Activated CD4-positive, alpha-beta memory T cell treated with anti-CD3 and anti-CD28 coated beads, Interleukin-2, amount 10 ng/mL, durations not matched to agents 7 days and 5 days (primary cell): ENCODE measurements at regions of chr2 and their contacts with region 1.

Region 1: DNA sequence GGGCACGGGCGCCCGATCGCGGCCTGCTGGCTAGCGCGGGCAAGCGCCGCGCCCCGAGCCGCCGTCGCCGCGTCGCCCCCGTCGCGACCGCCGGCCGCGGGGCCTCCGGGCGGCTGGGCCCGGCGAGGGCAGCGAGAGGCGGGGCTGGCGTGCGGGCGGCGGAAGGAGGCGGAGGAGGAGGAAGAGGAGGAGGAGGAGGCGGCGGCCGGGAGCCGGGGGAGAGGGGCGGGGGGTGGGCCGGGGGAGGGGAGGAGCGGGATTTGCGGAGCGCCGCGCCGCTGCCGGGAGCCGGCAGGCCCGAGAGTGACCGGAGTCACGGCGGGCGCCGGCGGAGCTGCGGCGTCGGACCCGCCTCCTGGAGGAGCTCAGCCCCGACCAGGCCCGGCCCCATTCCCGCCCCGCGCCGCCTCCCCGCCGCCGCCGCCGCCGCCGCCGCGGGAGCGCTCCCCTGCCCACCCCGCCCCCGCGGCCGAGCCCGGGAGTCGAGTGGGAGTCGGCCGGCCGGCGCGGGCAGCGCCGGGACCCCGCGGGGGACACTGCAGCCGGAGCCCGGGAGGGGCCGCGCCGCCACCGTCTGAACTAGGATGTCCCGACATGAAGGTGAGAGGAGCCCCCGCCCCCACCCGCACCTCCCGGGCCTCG is at the start of gene KCMF1:
- DNase-seq: peak; percentile 76
- H3K4me3 Mint-ChIP-seq: peak within 1 kb of the TSS; percentile 96
- H3K27ac Mint-ChIP-seq: peak within 1 kb of the TSS; percentile 100
- H3K4me1 Mint-ChIP-seq: peaks cover 47% of the 10 kb centered on the region
- H3K27me3 Mint-ChIP-seq: no peaks in the 10 kb centered on the region
- total RNA-seq, gene KCMF1: 87.0 to 92.9 TPM

Region 2: GRCh38 chr2:84905181-84906107 is 65.5 kb before region 1 on chr2 and contains the start of gene TMSB10:
- CTCF ChIA-PET with region 1: interaction called, 3 read pairs
- POLR2A ChIA-PET with region 1: interaction called, 63 read pairs
- DNase-seq: peak; percentile 91
- H3K4me3 Mint-ChIP-seq: peak within 1 kb of the TSS; percentile 89
- H3K27ac Mint-ChIP-seq: peak within 1 kb of the TSS; percentile 94
- H3K4me1 Mint-ChIP-seq: peaks cover 67% of the 10 kb centered on the region
- H3K27me3 Mint-ChIP-seq: no peaks in the 10 kb centered on the region
- total RNA-seq, gene TMSB10: 5,686 to 5,768 TPM

Region 3: DNA sequence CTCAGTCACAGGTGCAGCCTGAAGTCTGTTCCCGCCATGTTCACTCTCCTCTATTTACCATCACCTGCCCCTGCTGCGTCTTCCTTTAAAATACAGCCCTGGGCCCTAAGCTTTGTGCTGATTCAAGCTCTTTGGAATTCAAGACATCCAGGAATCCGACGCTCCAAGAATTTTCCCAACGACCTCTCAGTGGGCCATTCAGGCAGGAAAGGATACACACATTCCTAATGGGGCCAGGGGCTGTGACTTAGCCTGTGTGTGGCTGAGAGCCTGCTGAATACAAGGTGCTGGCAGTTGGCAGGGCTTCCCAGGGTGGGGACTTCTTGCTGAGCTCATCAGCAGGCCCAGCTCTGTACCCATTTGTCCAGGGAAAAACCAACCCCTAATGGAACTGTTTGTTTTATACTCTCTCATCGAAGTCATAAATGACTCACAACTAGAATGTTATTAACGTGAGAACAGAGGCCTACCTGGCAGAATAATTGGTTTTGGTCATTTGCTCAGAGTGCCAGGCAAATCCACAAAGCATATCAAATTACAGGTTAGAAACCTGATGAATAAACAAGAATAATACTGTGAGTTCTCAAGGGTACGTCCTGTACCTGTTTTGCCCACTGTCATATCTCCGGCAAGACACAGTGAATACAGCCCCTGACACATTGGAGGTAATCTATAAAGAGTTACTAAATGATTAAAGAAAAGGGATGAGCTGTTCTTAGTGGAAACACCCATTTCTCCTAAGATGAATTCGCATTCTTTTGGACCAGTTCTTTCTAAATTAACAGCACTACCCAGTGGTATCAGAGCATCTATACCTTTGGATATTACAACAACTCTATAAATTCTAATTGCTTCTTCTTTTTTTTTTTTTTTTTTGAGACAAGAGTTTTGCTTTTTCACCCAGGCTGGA is 12.6 kb before region 1 on chr2:
- CTCF ChIA-PET with region 1: interaction called, 3 read pairs
- POLR2A ChIA-PET with region 1: interaction called, 46 read pairs
- DNase-seq: no peak
- H3K4me3 Mint-ChIP-seq: no peak overlapping the region
- H3K27ac Mint-ChIP-seq: no peak overlapping the region
- H3K4me1 Mint-ChIP-seq: peaks cover 18% of the 10 kb centered on the region
- H3K27me3 Mint-ChIP-seq: no peaks in the 10 kb centered on the region

Region 4: GRCh38 chr2:85001595-85001994 is 30.6 kb after region 1 on chr2:
- CTCF ChIA-PET with region 1: interaction called, 3 read pairs
- POLR2A ChIA-PET with region 1: interaction called, 13 read pairs
- DNase-seq: no peak
- H3K4me3 Mint-ChIP-seq: no peak overlapping the region
- H3K27ac Mint-ChIP-seq: no peak overlapping the region
- H3K4me1 Mint-ChIP-seq: peaks cover 38% of the 10 kb centered on the region
- H3K27me3 Mint-ChIP-seq: no peaks in the 10 kb centered on the region

Region 5: DNA sequence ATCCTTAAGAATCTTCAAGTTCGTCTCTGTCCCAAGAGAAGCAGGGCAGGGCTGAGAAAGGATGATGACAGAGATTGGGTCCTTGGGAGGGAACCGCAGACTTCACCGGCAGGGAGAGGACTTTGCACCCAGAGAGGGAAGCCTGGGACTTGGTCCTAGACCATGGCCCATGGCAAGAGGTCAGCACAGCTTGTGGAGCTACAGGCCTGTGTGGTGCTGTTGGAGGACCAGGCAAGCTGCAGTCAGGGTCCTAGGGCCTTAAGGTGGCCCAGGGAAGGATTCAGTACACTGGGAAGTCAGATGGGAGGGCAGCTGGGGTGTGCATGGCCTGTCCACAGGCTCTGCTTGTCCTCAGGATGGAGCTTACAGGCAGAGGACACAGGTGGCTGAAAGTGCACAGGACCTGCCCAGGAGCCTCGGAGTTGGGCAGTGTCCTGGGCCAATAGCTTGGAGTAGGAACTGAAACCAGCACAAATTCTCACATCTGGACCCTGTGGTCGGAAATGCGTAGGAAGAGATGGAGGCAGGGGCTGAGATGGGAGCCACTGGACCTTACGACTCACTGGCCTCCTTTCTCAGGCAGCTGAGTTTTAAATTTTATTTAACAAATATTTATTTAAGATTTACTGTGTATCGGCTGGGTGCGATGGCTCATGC is 105.8 kb after region 1 on chr2:
- CTCF ChIA-PET with region 1: no interaction called
- POLR2A ChIA-PET with region 1: no interaction called
- DNase-seq: no peak
- H3K4me3 Mint-ChIP-seq: no peak overlapping the region
- H3K27ac Mint-ChIP-seq: no peak overlapping the region
- H3K4me1 Mint-ChIP-seq: no peaks in the 10 kb centered on the region
- H3K27me3 Mint-ChIP-seq: peaks cover 10% of the 10 kb centered on the region

Region 6: GRCh38 chr2:85457877-85458316 is 486.9 kb after region 1 on chr2:
- CTCF ChIA-PET with region 1: no interaction called
- POLR2A ChIA-PET with region 1: no interaction called
- DNase-seq: no peak
- H3K4me3 Mint-ChIP-seq: no peak overlapping the region
- H3K27ac Mint-ChIP-seq: no peak overlapping the region
- H3K4me1 Mint-ChIP-seq: no peaks in the 10 kb centered on the region
- H3K27me3 Mint-ChIP-seq: peaks cover 5% of the 10 kb centered on the region